Calu3 (cell line): ENCODE measurements at regions of chr5 and their contacts with region 1.

Region 1: GRCh38 chr5:154575546-154576428 is 97.8 kb upstream of the HAND1 start:
- DNase-seq: peak; percentile 13
- H3K4me3 Mint-ChIP-seq: no peak overlapping the region
- H3K27ac Mint-ChIP-seq: no peak overlapping the region
- H3K4me1 Mint-ChIP-seq: peaks cover 7% of the 10 kb centered on the region
- H3K27me3 Mint-ChIP-seq: peaks cover 63% of the 10 kb centered on the region
- CTCF ChIP-seq: no peak

Region 2: GRCh38 chr5:154273028-154273617 is 302.7 kb before region 1 on chr5:
- CTCF ChIA-PET with region 1: no interaction called
- intact Hi-C with region 1: no loop called
- DNase-seq: no peak
- H3K4me3 Mint-ChIP-seq: no peak overlapping the region
- H3K27ac Mint-ChIP-seq: no peak overlapping the region
- H3K4me1 Mint-ChIP-seq: peaks cover 23% of the 10 kb centered on the region
- H3K27me3 Mint-ChIP-seq: no peaks in the 10 kb centered on the region
- CTCF ChIP-seq: no peak

Region 3: DNA sequence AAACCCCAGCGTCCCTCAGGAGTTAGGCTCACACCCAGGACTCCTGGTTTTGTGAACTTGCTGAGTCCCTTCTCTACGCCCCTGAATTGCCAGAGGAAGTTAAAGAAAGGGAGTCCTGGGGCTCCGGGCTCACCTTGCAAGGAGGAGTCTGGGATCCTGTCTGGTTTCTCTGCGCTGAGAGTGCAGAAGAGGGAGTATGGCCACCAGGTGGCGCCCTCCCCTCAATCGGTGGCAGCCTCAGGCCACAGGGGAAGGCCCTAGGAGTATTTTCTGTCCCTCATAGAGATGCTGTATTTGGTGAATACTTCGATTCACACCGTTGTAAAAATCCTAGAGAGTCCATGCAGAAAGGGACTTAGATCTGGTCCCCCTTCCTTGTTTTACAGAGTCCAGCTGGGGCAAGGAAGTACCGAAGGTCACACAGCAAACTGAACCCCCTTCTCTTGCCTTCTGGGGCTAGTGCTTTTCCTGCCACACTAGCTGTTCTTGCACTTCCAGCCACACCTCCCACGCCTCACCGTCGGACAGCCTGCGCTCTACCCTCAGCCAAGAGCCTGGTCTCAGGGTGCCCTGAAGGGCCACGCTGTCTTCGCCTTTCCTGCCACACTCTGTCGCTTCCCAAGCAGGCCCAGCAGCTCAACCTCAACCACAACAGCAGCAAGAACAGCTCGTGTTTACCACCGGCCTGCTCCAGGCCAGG is 108.0 kb before region 1 on chr5:
- CTCF ChIA-PET with region 1: no interaction called
- intact Hi-C with region 1: loop called (anchors 1 kb)
- DNase-seq: peak; percentile 91
- H3K4me3 Mint-ChIP-seq: no peak overlapping the region
- H3K27ac Mint-ChIP-seq: no peak overlapping the region
- H3K4me1 Mint-ChIP-seq: no peaks in the 10 kb centered on the region
- H3K27me3 Mint-ChIP-seq: peaks cover 52% of the 10 kb centered on the region
- CTCF ChIP-seq: peak; percentile 96

Region 4: DNA sequence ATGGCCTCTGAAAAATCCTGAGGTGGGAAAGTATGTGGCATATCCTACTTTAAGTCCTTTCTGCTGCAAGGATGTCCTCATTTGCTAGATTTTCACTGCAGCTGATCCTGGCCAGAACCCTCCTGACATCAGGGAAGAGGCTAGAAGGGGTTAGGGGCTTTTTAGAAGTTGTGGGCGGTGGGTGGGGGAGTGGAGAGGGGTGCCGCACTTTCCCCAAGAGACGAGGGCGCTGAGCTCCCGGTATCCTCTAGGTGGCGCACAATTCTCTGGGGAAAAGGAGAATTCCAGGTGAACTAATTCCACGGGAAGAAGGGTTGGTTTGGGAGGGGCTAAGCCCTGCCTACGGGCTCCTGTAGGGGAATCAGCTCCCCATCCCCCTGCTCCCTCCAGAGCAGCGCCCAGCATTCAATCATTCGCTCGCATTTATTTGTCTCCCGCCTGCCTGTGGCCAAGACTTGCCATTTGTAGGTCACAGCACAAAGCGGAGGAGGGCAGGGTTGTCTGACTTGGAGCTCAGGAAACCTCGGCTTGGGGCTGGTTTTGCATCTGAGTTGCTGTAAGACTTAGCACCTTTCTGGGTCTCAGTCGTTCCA is 54.8 kb before region 1 on chr5:
- CTCF ChIA-PET with region 1: interaction called, 3 read pairs
- intact Hi-C with region 1: loop called (anchors 2 kb)
- DNase-seq: peak; percentile 70
- H3K4me3 Mint-ChIP-seq: no peak overlapping the region
- H3K27ac Mint-ChIP-seq: no peak overlapping the region
- H3K4me1 Mint-ChIP-seq: peaks cover 13% of the 10 kb centered on the region
- H3K27me3 Mint-ChIP-seq: peaks cover 52% of the 10 kb centered on the region
- CTCF ChIP-seq: peak; percentile 86